K562 (cell line): ENCODE measurements at regions of chr4 and their contacts with region 1.

Region 1: GRCh38 chr4:16001484-16001858 is 38.5 kb upstream of the FGFBP2 start:
- DNase-seq: peak; percentile 62 to 68 (median 64)
- ATAC-seq: peak; percentile 99
- H3K4me3 ChIP-seq: no peak overlapping the region
- H3K27ac ChIP-seq: no peak overlapping the region
- H3K4me1 ChIP-seq: no peaks in the 10 kb centered on the region
- H3K27me3 ChIP-seq: peaks cover 0 to 14% of the 10 kb centered on the region in 2 experiments; a peak in 4 of 5 replicates
- CTCF ChIP-seq: peak; percentile 67 to 82 (median 81)
- EP300 ChIP-seq: no peak
- POLR2A ChIP-seq: no peak
- RAD21 ChIP-seq: peak; percentile 74 to 79

Region 2: GRCh38 chr4:15729910-15730533 is 271.4 kb before region 1 on chr4:
- CTCF ChIA-PET with region 1: interaction called, 3 read pairs
- POLR2A ChIA-PET with region 1: no interaction called
- in situ Hi-C with region 1: no loop called
- intact Hi-C with region 1: loop called (anchors 5 kb)
- DNase-seq: peak; percentile 52 to 59 (median 56)
- ATAC-seq: peak; percentile 82
- H3K4me3 ChIP-seq: no peak overlapping the region
- H3K27ac ChIP-seq: no peak overlapping the region
- H3K4me1 ChIP-seq: no peaks in the 10 kb centered on the region
- H3K27me3 ChIP-seq: peaks cover 9 to 11% of the 10 kb centered on the region in 2 experiments; a peak in 4 of 5 replicates
- CTCF ChIP-seq: peak; percentile 53 to 80 (median 65)
- EP300 ChIP-seq: no peak
- POLR2A ChIP-seq: no peak
- RAD21 ChIP-seq: peak; percentile 51 to 65

Region 3: DNA sequence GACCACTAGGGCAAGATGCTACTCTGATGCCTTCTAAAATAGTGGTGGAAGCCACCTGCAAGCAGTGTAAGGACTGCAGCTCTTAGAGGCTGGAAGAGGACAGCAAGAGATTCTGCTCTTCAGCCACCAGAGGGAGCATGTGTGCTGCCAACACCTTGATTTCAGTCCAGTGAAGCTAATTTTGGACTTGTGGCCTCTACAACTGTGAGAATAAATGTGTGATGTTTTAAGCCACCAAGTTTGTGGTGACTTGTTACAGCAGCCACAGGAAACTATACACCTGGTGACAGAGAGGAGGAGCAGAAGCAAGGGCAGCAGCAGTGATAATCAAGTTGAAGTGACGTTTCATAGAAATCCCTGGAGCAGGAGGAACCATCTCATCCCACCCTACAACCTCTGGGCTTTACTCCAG is 118.8 kb before region 1 on chr4:
- CTCF ChIA-PET with region 1: no interaction called
- POLR2A ChIA-PET with region 1: no interaction called
- in situ Hi-C with region 1: no loop called
- intact Hi-C with region 1: loop called (anchors 2 kb)
- DNase-seq: peak; percentile 44 to 70 (median 50)
- ATAC-seq: peak; percentile 96
- H3K4me3 ChIP-seq: no peak overlapping the region
- H3K27ac ChIP-seq: no peak overlapping the region
- H3K4me1 ChIP-seq: no peaks in the 10 kb centered on the region
- H3K27me3 ChIP-seq: no peaks in the 10 kb centered on the region; a peak in 1 of 5 replicates
- CTCF ChIP-seq: peak; percentile 76 to 78 (median 78)
- EP300 ChIP-seq: no peak
- POLR2A ChIP-seq: no peak
- RAD21 ChIP-seq: peak; percentile 49 to 67

Region 4: GRCh38 chr4:15963001-15963451 is 38.4 kb before region 1 on chr4 and contains the start of gene FGFBP2:
- CTCF ChIA-PET with region 1: no interaction called
- POLR2A ChIA-PET with region 1: no interaction called
- in situ Hi-C with region 1: no loop called
- intact Hi-C with region 1: loop called (anchors 5 kb)
- DNase-seq: peak in 2 of 4 experiments; percentile 8 to 11
- ATAC-seq: peak; percentile 78
- H3K4me3 ChIP-seq: no peak within 1 kb of the TSS
- H3K27ac ChIP-seq: no peak within 1 kb of the TSS
- H3K4me1 ChIP-seq: peaks cover 0 to 5% of the 10 kb centered on the region in 2 experiments; a peak in 1 of 5 replicates
- H3K27me3 ChIP-seq: peaks cover 0 to 11% of the 10 kb centered on the region in 2 experiments; a peak in 3 of 5 replicates
- CTCF ChIP-seq: peak; percentile 33 to 52 (median 35); a peak in 5 of 6 replicates
- EP300 ChIP-seq: no peak
- POLR2A ChIP-seq: no peak
- RAD21 ChIP-seq: peak in 1 of 2 experiments; percentile 32; a peak in 1 of 4 replicates
- polyA plus RNA-seq, gene FGFBP2: not detected